ENCODE measurements at regions of chr7 and their contacts with region 1.

Region 1: DNA sequence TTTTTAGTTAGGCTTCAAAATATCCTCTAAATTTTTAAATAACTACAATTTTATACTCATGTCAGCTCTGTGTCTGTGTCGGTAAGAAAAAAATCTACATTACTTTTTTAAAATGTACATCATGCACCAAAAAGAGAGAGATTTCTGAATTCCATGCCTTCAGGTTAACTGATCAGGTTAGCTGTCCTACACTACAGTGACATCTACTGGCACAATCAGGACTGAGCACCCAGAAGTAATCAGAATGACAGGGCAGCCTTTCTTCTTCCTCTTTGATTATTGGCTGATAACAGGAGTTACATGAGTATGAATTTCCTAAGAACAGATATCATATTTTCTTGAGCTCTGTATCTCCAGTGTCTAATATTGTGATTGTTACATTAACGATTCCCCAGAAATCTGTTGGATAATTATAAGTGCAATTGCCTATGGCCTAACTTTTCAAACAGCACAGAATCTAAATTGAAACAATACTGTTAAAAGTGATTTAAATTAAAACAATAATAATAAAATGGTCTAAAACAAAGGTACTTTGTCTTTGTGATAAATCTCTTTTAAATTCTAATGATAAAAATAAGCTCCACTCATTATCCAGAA is 41.8 kb upstream of the HYCC1 start:
- DNase-seq: peak; percentile 45
- H3K4me3 ChIP-seq: no peak overlapping the region
- H3K27ac ChIP-seq: no peak overlapping the region
- H3K27me3 ChIP-seq: no peaks in the 10 kb centered on the region
- CTCF ChIP-seq: peak; percentile 97

Region 2: GRCh38 chr7:22565315-22565811 is 490.3 kb before region 1 on chr7:
- CTCF ChIA-PET with region 1: interaction called, 236 read pairs
- POLR2A ChIA-PET with region 1: no interaction called
- DNase-seq: no peak
- H3K4me3 ChIP-seq: peak overlapping the region; percentile 8; the same call in 1 of the 2 replicates
- H3K27ac ChIP-seq: peak overlapping the region; percentile 32
- H3K27me3 ChIP-seq: no peaks in the 10 kb centered on the region
- CTCF ChIP-seq: no peak

Region 3: GRCh38 chr7:22782616-22783232 is 273.0 kb before region 1 on chr7:
- CTCF ChIA-PET with region 1: interaction called, 16 read pairs
- POLR2A ChIA-PET with region 1: no interaction called
- DNase-seq: no peak
- H3K4me3 ChIP-seq: no peak overlapping the region
- H3K27ac ChIP-seq: no peak overlapping the region
- H3K27me3 ChIP-seq: no peaks in the 10 kb centered on the region
- CTCF ChIP-seq: peak; percentile 69

Region 4: DNA sequence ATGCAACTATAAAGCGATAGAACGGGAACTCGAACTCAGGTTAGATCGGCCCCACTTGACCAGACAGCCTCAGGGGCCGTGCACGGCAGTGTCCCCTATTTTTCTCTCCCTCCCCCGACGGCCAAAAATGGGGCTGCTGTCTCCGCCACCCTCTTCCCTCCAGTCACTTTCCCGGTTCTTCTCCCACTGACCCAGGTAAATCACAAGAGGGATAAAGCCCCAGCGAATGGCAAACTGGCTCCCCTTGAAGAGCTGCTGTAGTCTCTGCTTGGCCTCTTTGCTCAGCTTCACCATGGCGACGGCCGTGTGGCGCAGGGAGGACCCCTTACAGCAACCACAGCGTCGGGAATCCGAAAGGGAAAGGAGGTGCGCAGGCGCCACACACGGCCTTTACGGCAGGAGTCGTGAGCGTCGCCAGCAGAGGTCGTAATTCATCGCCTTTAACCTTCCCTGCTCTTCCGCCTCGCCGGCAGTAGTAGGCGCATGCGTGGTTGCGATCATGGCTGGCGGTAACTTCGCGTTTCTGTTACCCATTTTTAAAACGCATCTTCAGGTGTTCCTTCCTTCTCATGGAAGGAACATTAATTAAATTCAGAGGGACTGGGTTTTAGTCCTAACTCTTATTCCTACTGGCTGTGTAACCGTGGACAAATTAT is 233.1 kb before region 1 on chr7 and contains the start of gene TOMM7:
- CTCF ChIA-PET with region 1: interaction called, 17 read pairs
- POLR2A ChIA-PET with region 1: no interaction called
- DNase-seq: peak; percentile 94
- H3K4me3 ChIP-seq: peak within 1 kb of the TSS; percentile 95
- H3K27ac ChIP-seq: peak within 1 kb of the TSS; percentile 69
- H3K27me3 ChIP-seq: no peaks in the 10 kb centered on the region
- CTCF ChIP-seq: no peak
- polyA plus RNA-seq, gene TOMM7: 390 and 549 TPM in 2 replicates

Region 5: GRCh38 chr7:22867003-22867402 is 188.7 kb before region 1 on chr7:
- CTCF ChIA-PET with region 1: interaction called, 13 read pairs
- POLR2A ChIA-PET with region 1: interaction called, 5 read pairs
- DNase-seq: no peak
- H3K4me3 ChIP-seq: no peak overlapping the region
- H3K27ac ChIP-seq: no peak overlapping the region
- H3K27me3 ChIP-seq: no peaks in the 10 kb centered on the region
- CTCF ChIP-seq: no peak

Region 6: DNA sequence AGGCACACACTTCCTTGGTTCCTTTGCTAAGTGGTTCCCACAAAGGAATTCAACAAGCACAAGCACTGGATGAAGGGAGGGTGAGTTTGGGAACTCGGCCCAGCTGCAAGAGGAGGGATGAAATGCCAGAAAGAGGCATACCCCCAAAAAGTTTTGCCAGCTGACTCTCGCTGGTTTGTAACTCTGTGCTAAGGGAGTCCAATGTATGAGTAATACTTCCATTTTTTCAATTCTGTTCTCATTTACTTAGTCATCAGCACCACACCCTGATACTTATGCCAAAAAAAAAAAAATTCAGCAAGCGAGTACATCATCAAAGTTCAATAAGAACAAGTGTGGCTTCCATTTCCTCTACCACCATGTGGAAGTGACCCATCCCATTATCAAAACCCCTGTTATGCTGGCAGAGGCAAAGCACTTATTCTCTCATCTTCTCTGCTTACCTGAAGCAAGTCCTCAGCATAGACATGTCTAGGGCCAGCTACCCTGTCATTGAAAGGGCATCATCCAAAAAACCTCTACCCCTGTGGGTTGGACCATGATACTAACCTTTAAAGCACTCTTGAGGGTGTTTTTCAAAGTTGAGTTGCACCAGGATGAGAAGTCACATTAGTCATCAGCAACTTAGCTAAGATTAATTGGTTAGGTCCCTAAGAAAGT is 34.8 kb before region 1 on chr7:
- CTCF ChIA-PET with region 1: interaction called, 25 read pairs
- POLR2A ChIA-PET with region 1: no interaction called
- DNase-seq: peak; percentile 47
- H3K4me3 ChIP-seq: no peak overlapping the region
- H3K27ac ChIP-seq: peak overlapping the region; percentile 72
- H3K27me3 ChIP-seq: no peaks in the 10 kb centered on the region
- CTCF ChIP-seq: no peak

Region 7: DNA sequence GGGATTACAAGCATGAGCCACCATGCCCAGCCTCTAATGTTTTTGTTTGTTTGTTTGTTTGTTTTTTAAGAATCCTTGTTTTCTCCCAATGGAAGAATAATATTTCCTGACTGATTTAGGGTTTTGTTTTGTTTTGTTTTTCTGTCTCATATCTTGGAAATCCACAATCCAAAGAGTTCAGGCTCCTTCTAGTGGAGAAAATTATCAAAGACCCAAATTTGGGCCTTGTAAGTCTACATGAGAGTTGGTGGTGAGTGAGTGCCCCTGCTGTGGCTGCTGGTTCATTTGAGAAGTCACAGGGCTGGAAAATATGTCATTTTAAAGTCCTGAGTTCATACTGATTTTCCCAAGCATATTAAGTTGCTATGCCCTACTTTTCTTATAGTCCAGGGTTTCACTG is 16.4 kb after region 1 on chr7:
- CTCF ChIA-PET with region 1: interaction called, 21 read pairs
- POLR2A ChIA-PET with region 1: no interaction called
- DNase-seq: no peak
- H3K4me3 ChIP-seq: no peak overlapping the region
- H3K27ac ChIP-seq: no peak overlapping the region
- H3K27me3 ChIP-seq: no peaks in the 10 kb centered on the region
- CTCF ChIP-seq: peak; percentile 46